ENCODE measurements at regions of chr1 and their contacts with region 1.

Region 1: GRCh38 chr1:202056644-202057461 is 46.5 kb downstream of the ELF3 start:
- DNase-seq: peak; percentile 89
- ATAC-seq: peak; percentile 88
- H3K4me3 ChIP-seq: peak overlapping the region in 1 of 3 experiments; percentile 59; a peak in 3 of 6 replicates
- H3K27ac ChIP-seq: peak overlapping the region; percentile 60
- H3K4me1 ChIP-seq: peaks cover 66% of the 10 kb centered on the region
- H3K27me3 ChIP-seq: no peaks in the 10 kb centered on the region
- CTCF ChIP-seq: peak; percentile 21; the same call in 1 of the 2 replicates
- EP300 ChIP-seq: 0 out of 4 replicates have a peak, but pooled peaks of 1 of the 2 experiments have one; percentile 48
- POLR2A ChIP-seq: peak in 1 of 2 experiments; percentile 46; a peak in 1 of 4 replicates
- RAD21 ChIP-seq: no peak

Region 2: DNA sequence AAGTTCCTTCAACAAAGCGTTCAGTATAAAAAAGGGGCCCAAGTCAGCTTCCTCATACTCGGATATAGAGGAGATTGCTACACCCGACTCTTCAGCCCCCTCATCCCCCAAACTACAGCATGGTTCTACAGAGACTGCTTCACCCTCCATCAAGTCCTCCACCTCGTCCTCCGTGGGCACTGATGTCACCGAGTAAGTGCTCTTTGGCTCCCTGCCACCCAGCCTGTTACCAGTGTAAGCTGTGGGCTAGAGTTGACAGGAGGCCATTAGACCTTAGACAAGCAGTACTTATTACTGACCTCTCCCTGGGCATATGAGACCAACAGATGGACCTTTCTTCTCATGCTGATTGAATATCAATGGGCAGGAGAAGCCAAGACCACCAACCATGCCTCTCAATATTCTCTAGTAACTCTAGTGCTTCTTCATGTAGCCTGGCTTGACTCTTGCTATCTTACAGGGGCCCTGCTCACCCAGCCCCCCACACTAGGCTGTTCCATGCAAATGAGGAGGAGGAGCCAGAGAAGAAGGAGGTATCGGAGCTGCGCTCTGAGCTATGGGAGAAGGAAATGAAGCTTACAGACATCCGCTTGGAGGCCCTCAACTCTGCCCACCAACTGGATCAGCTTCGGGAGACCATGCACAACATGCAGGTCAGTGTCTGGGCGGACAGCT is 248.8 kb before region 1 on chr1:
- CTCF ChIA-PET with region 1: no interaction called
- POLR2A ChIA-PET with region 1: no interaction called
- in situ Hi-C with region 1: no loop called
- intact Hi-C with region 1: no loop called
- DNase-seq: no peak
- ATAC-seq: no peak
- H3K4me3 ChIP-seq: no peak overlapping the region
- H3K27ac ChIP-seq: no peak overlapping the region
- H3K4me1 ChIP-seq: no peaks in the 10 kb centered on the region
- H3K27me3 ChIP-seq: peaks cover 4 to 31% of the 10 kb centered on the region in 2 experiments; a peak in 4 of 5 replicates
- CTCF ChIP-seq: no peak
- EP300 ChIP-seq: no peak
- POLR2A ChIP-seq: no peak
- RAD21 ChIP-seq: no peak

Region 3: GRCh38 chr1:202034683-202035462 is 22.0 kb before region 1 on chr1:
- CTCF ChIA-PET with region 1: no interaction called
- POLR2A ChIA-PET with region 1: interaction called, 23 read pairs
- in situ Hi-C with region 1: no loop called
- intact Hi-C with region 1: no loop called
- DNase-seq: peak; percentile 93
- ATAC-seq: peak; percentile 99
- H3K4me3 ChIP-seq: peak overlapping the region; percentile 54 to 75 (median 57)
- H3K27ac ChIP-seq: peak overlapping the region; percentile 75
- H3K4me1 ChIP-seq: peaks cover 78% of the 10 kb centered on the region
- H3K27me3 ChIP-seq: no peaks in the 10 kb centered on the region
- CTCF ChIP-seq: 0 out of 2 replicates have a peak, but pooled peaks have one; percentile 3
- EP300 ChIP-seq: peak in 1 of 2 experiments; percentile 69; a peak in 1 of 4 replicates
- POLR2A ChIP-seq: peak; percentile 39 to 58; a peak in 3 of 4 replicates
- RAD21 ChIP-seq: no peak

Region 4: DNA sequence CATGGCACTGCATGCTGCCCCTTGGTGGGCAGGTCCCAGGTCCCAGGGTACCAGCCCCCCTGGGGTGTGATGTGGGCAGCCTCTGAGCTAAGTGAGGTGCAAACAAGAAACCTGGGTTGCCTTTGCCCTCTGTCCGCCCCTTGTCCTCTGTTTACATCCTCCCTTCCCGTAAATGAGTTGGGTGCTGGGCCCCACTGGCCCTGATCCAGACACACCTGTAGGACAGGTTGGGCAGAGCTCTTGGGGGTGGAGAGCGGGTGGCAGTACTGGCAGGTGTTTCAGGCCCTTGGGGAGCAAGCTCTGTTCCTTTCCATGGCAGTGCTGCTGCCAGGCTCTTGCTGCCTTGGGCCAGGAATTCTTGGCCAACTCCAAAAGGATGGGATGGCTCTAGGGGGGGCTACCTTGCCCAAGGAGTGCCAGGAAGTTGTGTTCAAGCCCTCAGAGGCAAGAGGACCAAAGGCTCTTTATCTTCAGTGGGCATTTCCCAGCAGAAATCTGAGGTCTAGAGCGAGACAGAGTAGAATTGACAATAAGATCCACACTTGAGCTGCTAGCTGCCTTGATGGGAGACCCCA is 10.5 kb before region 1 on chr1:
- CTCF ChIA-PET with region 1: no interaction called
- POLR2A ChIA-PET with region 1: interaction called, 26 read pairs
- in situ Hi-C with region 1: no loop called
- intact Hi-C with region 1: no loop called
- DNase-seq: no peak
- ATAC-seq: peak; percentile 11; the same call in 2 of the 3 replicates
- H3K4me3 ChIP-seq: peak overlapping the region in 1 of 3 experiments; percentile 49; a peak in 2 of 6 replicates
- H3K27ac ChIP-seq: no peak overlapping the region
- H3K4me1 ChIP-seq: peaks cover 80% of the 10 kb centered on the region
- H3K27me3 ChIP-seq: no peaks in the 10 kb centered on the region
- CTCF ChIP-seq: no peak
- EP300 ChIP-seq: peak in 1 of 2 experiments; percentile 68; a peak in 1 of 4 replicates
- POLR2A ChIP-seq: no peak
- RAD21 ChIP-seq: no peak

Region 5: GRCh38 chr1:202076050-202076511 is 19.2 kb after region 1 on chr1:
- CTCF ChIA-PET with region 1: no interaction called
- POLR2A ChIA-PET with region 1: interaction called, 26 read pairs
- in situ Hi-C with region 1: no loop called
- intact Hi-C with region 1: no loop called
- DNase-seq: peak; percentile 68
- ATAC-seq: peak; percentile 79
- H3K4me3 ChIP-seq: peak overlapping the region; percentile 5 to 58 (median 34); a peak in 5 of 6 replicates
- H3K27ac ChIP-seq: peak overlapping the region; percentile 30
- H3K4me1 ChIP-seq: peaks cover 57% of the 10 kb centered on the region
- H3K27me3 ChIP-seq: no peaks in the 10 kb centered on the region
- CTCF ChIP-seq: no peak
- EP300 ChIP-seq: peak in 1 of 2 experiments; percentile 48; a peak in 1 of 4 replicates
- POLR2A ChIP-seq: peak in 1 of 2 experiments; percentile 59; a peak in 1 of 4 replicates
- RAD21 ChIP-seq: no peak

Region 6: GRCh38 chr1:202710070-202711045 is 653.5 kb after region 1 on chr1 and contains the start of gene SYT2:
- CTCF ChIA-PET with region 1: no interaction called
- POLR2A ChIA-PET with region 1: no interaction called
- in situ Hi-C with region 1: no loop called
- intact Hi-C with region 1: no loop called
- DNase-seq: no peak
- ATAC-seq: peak; percentile 84
- H3K4me3 ChIP-seq: peak within 1 kb of the TSS; percentile 19 to 60 (median 23); a peak in 3 of 6 replicates
- H3K27ac ChIP-seq: no peak within 1 kb of the TSS
- H3K4me1 ChIP-seq: 0 out of 2 replicates have a peak, but pooled peaks cover 8% of the 10 kb centered on the region
- H3K27me3 ChIP-seq: peaks cover 21 to 76% of the 10 kb centered on the region in 2 experiments
- CTCF ChIP-seq: no peak
- EP300 ChIP-seq: no peak
- POLR2A ChIP-seq: no peak
- RAD21 ChIP-seq: no peak
- total RNA-seq, gene SYT2: not detected in 2 replicates

Measured in HepG2 (cell line).